Mammary epithelial cell (primary cell): ENCODE measurements at regions of chr11 and their contacts with region 1.

Region 1: DNA sequence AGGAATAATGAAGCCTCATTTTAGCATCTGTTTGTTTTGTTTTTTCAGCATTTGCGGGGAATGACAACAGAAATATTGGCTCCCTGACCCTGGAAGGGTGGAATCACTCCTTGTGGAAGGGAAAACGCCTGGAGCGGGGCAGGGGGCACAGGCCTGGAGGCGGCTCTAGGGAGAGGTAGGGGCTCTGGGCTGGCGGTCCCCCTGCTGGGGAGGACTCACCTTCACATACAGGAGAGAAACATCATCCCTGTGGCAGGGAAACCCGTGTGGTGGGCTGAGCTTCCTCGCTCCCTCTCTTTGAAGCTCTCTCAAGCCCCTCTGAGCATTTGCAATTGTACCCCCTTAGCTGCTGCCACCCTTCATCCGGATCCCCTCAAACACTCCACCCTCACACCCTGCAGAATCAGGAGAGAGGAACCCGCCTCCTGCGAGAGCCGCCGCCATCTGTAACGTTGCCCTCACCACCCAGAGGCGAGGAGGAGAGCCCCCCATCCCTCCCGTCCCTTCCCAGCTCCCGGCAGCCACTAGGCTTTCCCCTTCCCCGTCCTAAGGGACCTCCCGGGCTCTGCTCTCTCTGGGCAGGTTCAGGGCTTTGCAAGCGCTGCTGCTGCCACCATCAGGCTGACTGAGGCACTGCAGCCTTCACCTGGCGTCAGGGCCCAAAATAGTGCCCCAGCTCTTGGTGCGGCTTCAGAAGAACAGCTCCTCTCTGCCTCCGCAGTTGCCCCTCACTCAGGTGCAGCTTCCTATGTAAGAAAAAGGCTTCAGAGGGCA is 10.4 kb downstream of the KIRREL3 start:
- DNase-seq: peak; percentile 53
- H3K4me3 ChIP-seq: peak overlapping the region in 1 of 3 experiments; percentile 8
- H3K27ac ChIP-seq: peak overlapping the region; percentile 90
- H3K4me1 ChIP-seq: peaks cover 29% of the 10 kb centered on the region
- H3K27me3 ChIP-seq: no peaks in the 10 kb centered on the region
- CTCF ChIP-seq: peak; percentile 95 to 99

Region 2: GRCh38 chr11:126310228-126310991 is 679.7 kb before region 1 on chr11:
- CTCF ChIA-PET with region 1: no interaction called
- dilution Hi-C with region 1: no loop called
- in situ Hi-C with region 1: no loop called
- intact Hi-C with region 1: loop called (anchors 1 kb)
- DNase-seq: peak; percentile 50
- H3K4me3 ChIP-seq: no peak overlapping the region
- H3K27ac ChIP-seq: no peak overlapping the region
- H3K4me1 ChIP-seq: peaks cover 22% of the 10 kb centered on the region
- H3K27me3 ChIP-seq: no peaks in the 10 kb centered on the region
- CTCF ChIP-seq: peak; percentile 86 to 93

Region 3: GRCh38 chr11:126440792-126441514 is 549.2 kb before region 1 on chr11:
- CTCF ChIA-PET with region 1: no interaction called
- dilution Hi-C with region 1: no loop called
- in situ Hi-C with region 1: no loop called
- intact Hi-C with region 1: loop called (anchors 1 kb)
- DNase-seq: peak; percentile 49
- H3K4me3 ChIP-seq: no peak overlapping the region
- H3K27ac ChIP-seq: no peak overlapping the region
- H3K4me1 ChIP-seq: no peaks in the 10 kb centered on the region
- H3K27me3 ChIP-seq: no peaks in the 10 kb centered on the region
- CTCF ChIP-seq: peak; percentile 87 to 93

Region 4: GRCh38 chr11:126607374-126607773 is 382.8 kb before region 1 on chr11:
- CTCF ChIA-PET with region 1: no interaction called
- dilution Hi-C with region 1: loop called (anchors 25 kb)
- in situ Hi-C with region 1: loop called in 1 of 2 experiments (anchors 25 kb)
- intact Hi-C with region 1: loop called (anchors 1 kb)
- DNase-seq: peak; percentile 39
- H3K4me3 ChIP-seq: no peak overlapping the region
- H3K27ac ChIP-seq: no peak overlapping the region
- H3K4me1 ChIP-seq: no peaks in the 10 kb centered on the region
- H3K27me3 ChIP-seq: no peaks in the 10 kb centered on the region
- CTCF ChIP-seq: peak; percentile 84 to 97

Region 5: GRCh38 chr11:126917531-126918204 is 72.5 kb before region 1 on chr11:
- CTCF ChIA-PET with region 1: no interaction called
- dilution Hi-C with region 1: loop called (anchors 5 kb)
- in situ Hi-C with region 1: no loop called
- intact Hi-C with region 1: no loop called
- DNase-seq: peak; percentile 96
- H3K4me3 ChIP-seq: no peak overlapping the region
- H3K27ac ChIP-seq: peak overlapping the region; percentile 99
- H3K4me1 ChIP-seq: peaks cover 19% of the 10 kb centered on the region
- H3K27me3 ChIP-seq: no peaks in the 10 kb centered on the region
- CTCF ChIP-seq: no peak

Region 6: GRCh38 chr11:126978911-126979310 is 11.2 kb before region 1 on chr11:
- CTCF ChIA-PET with region 1: no interaction called
- dilution Hi-C with region 1: no loop called
- in situ Hi-C with region 1: no loop called
- intact Hi-C with region 1: no loop called
- DNase-seq: no peak
- H3K4me3 ChIP-seq: no peak overlapping the region
- H3K27ac ChIP-seq: no peak overlapping the region
- H3K4me1 ChIP-seq: peaks cover 7% of the 10 kb centered on the region
- H3K27me3 ChIP-seq: no peaks in the 10 kb centered on the region
- CTCF ChIP-seq: no peak